Left ventricle myocardium superior (tissue), 1 donor: ENCODE measurements at regions of chr2 and their contacts with region 1.

Region 1: DNA sequence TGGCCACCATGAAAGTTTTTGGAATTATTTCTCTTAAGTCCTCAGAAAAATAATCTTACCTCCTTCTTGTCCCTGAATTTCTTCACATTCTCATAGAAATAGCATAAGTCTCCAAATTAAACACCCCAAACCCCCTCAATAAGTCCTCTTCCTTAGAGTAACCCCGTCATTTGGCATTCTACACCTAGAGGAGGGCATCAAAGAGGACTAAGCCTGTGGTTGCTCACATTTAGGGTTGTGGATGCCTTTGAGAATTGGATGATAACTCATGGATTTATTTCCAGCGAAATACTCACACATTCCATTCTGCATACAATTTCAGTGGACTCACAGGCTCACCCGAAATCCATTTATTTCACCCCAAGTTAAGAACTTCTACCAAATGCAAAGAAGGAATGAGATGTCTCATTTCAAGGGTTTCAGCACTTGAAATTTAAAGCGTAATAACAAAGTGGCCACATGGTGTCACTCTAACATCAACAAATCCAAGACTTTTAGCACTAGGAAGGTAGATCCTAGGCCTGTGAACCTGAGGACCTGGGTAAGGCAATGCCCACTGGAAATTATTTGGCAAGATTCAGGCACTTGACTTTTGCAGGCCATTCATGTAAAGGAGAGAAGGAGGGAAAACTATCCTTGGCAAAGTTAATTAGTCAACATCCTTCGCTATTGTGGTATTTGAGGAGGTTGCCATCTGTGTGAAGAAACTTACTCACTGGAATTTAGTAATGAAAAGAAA is 24.6 kb downstream of the DYTN start:
- DNase-seq: no peak
- ATAC-seq: peak; percentile 37

Region 2: GRCh38 chr2:206125924-206126323 is 567.6 kb before region 1 on chr2:
- intact Hi-C with region 1: no loop called
- DNase-seq: no peak
- ATAC-seq: no peak

Region 3: DNA sequence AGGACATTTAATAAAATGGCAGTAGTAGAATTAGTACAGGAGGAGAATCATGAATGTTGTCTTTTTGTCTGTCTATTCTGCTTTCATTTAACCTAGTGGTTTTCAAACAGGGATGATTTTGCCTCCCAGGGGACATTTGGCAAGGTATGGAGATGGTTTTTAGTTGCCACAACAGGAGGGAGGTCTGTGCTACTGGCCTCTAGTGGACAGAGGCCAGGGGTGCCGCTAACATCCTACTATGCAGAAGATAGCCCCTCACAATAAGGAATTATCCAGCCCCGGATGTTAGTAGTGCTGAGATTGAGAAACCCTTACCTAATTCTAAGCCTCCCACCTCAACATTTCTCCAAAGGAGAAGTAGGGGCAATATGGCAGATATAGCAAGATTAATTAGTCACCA is 90.2 kb after region 1 on chr2:
- intact Hi-C with region 1: loop called (anchors 5 kb)
- DNase-seq: no peak
- ATAC-seq: no peak